ENCODE measurements at regions of chr15 and their contacts with region 1.

Region 1: DNA sequence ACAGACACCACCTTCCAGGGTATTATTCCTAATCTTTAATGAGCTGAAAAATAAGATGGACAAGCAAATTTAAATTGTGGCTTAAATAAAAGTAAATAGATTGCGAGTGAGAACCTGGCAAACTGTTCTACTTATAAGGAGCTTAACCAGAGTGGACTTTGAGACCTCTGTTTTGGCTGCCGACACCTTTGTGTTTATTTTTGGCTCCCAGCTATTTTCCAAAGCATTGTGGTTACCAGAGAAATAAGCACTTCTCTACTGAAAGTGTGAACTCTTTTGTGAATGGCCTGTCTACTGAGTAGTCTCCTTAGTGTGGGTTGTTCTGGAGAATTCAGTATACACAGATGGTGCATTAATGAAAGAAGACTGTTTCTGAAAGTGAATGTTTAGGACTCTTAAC is 109.4 kb downstream of the ATP8B4 start:
- DNase-seq: no peak
- ATAC-seq: no peak
- H3K4me3 ChIP-seq: no peak overlapping the region
- H3K4me3 Mint-ChIP-seq: no peak overlapping the region
- H3K27ac ChIP-seq: no peak overlapping the region
- H3K27ac Mint-ChIP-seq: no peak overlapping the region
- H3K4me1 ChIP-seq: no peaks in the 10 kb centered on the region
- H3K4me1 Mint-ChIP-seq: no peaks in the 10 kb centered on the region
- H3K27me3 ChIP-seq: peaks cover 0 to 5% of the 10 kb centered on the region in 2 experiments
- H3K27me3 Mint-ChIP-seq: peaks cover 5% of the 10 kb centered on the region
- CTCF ChIP-seq: no peak

Region 2: GRCh38 chr15:48842501-48842900 is 1167.1 kb before region 1 on chr15:
- CTCF ChIA-PET with region 1: no interaction called
- POLR2A ChIA-PET with region 1: no interaction called
- intact Hi-C with region 1: loop called in 1 of 2 experiments (anchors 5 kb)
- DNase-seq: no peak
- ATAC-seq: no peak
- H3K4me3 ChIP-seq: no peak overlapping the region
- H3K4me3 Mint-ChIP-seq: no peak overlapping the region
- H3K27ac ChIP-seq: no peak overlapping the region
- H3K27ac Mint-ChIP-seq: no peak overlapping the region
- H3K4me1 ChIP-seq: no peaks in the 10 kb centered on the region
- H3K4me1 Mint-ChIP-seq: no peaks in the 10 kb centered on the region
- H3K27me3 ChIP-seq: no peaks in the 10 kb centered on the region
- H3K27me3 Mint-ChIP-seq: peaks cover 4% of the 10 kb centered on the region
- CTCF ChIP-seq: no peak

Measured in CD4-positive, alpha-beta T cell (primary cell).